Sigmoid colon (tissue), 7 donors: ENCODE measurements at regions of chr11 and their contacts with region 1.

Region 1: GRCh38 chr11:130827451-130828377 is 88.6 kb downstream of the SNX19 start:
- DNase-seq: peak; percentile 80
- H3K4me3 ChIP-seq: no peak overlapping the region
- H3K27ac ChIP-seq: peak overlapping the region; percentile 47 to 71 (median 65)
- H3K4me1 ChIP-seq: peaks cover 0 to 57% (median 50%) of the 10 kb centered on the region in 4 donors
- H3K27me3 ChIP-seq: no peaks in the 10 kb centered on the region
- CTCF ChIP-seq: peak; percentile 16 to 53 (median 30)
- EP300 ChIP-seq: no peak
- POLR2A ChIP-seq: no peak

Region 2: DNA sequence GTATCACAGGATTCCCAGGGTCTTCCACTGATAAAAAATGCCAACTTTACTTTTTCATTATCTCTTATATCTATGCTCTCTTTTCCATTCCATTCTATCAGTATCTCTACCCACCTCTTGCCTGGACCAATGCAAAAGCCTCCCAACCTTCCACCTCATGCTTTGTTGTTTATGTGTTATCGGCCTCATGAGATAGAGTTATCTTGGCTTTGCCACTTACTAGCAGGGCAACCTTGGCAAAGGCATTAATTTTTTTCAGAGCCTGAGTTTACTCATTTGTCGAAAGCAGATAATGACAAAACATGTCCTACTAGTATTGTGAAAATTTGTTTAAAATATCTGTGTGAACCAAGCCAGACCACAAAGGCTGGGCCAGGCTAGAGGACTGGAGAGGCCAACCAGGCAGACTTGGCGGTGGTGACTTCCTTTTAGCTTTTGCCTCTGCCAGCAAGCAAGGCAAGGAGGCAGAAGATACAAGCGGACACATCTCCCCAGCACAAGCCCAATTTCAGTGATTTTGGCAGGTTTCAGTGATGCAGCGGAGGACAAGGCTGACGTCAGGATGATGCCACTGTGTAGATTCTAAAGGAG is 272.4 kb before region 1 on chr11:
- intact Hi-C with region 1: no loop called
- DNase-seq: no peak
- H3K4me3 ChIP-seq: no peak overlapping the region
- H3K27ac ChIP-seq: no peak overlapping the region
- H3K4me1 ChIP-seq: peaks cover 0 to 6% (median 0%) of the 10 kb centered on the region in 4 donors
- H3K27me3 ChIP-seq: no peaks in the 10 kb centered on the region
- CTCF ChIP-seq: no peak
- EP300 ChIP-seq: no peak
- POLR2A ChIP-seq: no peak

Region 3: GRCh38 chr11:130623670-130624668 is 203.7 kb before region 1 on chr11:
- intact Hi-C with region 1: loop called (anchors 10 kb)
- DNase-seq: no peak
- H3K4me3 ChIP-seq: no peak overlapping the region
- H3K27ac ChIP-seq: peak overlapping the region; percentile 60 to 84 (median 74)
- H3K4me1 ChIP-seq: peaks cover 0 to 51% (median 46%) of the 10 kb centered on the region in 4 donors
- H3K27me3 ChIP-seq: no peaks in the 10 kb centered on the region
- CTCF ChIP-seq: peak in 3 of 4 experiments; percentile 27 to 44 (median 36)
- EP300 ChIP-seq: peak in 2 of 4 donors; percentile 54 to 70
- POLR2A ChIP-seq: no peak

Region 4: GRCh38 chr11:130744794-130745193 is 82.9 kb before region 1 on chr11:
- intact Hi-C with region 1: no loop called
- DNase-seq: no peak
- H3K4me3 ChIP-seq: no peak overlapping the region
- H3K27ac ChIP-seq: no peak overlapping the region
- H3K4me1 ChIP-seq: no peaks in the 10 kb centered on the region
- H3K27me3 ChIP-seq: no peaks in the 10 kb centered on the region
- CTCF ChIP-seq: no peak
- EP300 ChIP-seq: no peak
- POLR2A ChIP-seq: no peak